ENCODE measurements at regions of chr12 and their contacts with region 1.

Region 1: DNA sequence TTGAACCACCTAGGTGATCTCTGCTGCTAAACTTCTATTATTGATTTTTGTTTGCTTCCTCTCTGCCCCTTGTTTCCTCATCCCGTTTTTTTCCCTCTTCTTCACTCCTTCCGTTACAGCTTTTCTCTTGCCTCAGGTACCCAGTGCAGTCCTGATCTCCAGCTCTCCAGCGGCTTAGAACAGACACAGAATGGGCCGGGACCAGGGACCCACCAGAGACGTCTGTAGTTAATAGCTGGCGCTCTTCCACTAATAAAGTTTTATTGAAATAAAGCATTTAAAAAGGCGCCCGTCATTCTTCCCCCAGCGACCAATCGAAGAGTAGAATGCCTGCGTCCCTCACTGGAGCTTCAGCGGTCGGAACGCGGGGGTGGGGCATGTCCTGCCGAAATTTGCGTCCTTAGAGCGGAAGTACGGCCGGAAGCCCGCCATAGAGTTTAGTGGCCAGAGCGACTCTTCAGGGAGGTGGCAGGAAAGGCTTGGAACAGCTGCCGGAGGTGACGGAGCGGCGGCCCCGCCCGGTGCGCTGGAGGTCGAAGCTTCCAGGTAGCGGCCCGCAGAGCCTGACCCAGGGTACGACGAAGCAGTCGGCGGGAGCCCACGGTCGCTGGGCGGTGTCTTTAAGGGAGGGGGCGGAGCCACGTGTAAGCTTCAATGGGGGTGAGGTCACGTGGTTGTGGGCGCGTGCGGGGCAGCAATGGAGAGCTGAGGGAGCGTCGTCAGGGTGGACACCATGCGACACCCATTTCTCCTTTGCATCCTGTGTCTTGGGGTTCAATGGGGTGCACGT is at the start of gene COPS7A:
- DNase-seq: peak; percentile 93
- ATAC-seq: peak; percentile 97
- H3K4me3 Mint-ChIP-seq: peak within 1 kb of the TSS; percentile 99
- H3K27ac Mint-ChIP-seq: peak within 1 kb of the TSS; percentile 99
- H3K4me1 Mint-ChIP-seq: peaks cover 22% of the 10 kb centered on the region
- H3K27me3 Mint-ChIP-seq: peaks cover 3% of the 10 kb centered on the region
- total RNA-seq, gene COPS7A: 29.8 to 35.6 TPM

Region 2: GRCh38 chr12:6613776-6614512 is 109.9 kb before region 1 on chr12:
- POLR2A ChIA-PET with region 1: interaction called, 11 read pairs
- DNase-seq: peak; percentile 65
- ATAC-seq: peak; percentile 48
- H3K4me3 Mint-ChIP-seq: no peak overlapping the region
- H3K27ac Mint-ChIP-seq: peak overlapping the region; percentile 87
- H3K4me1 Mint-ChIP-seq: peaks cover 50% of the 10 kb centered on the region
- H3K27me3 Mint-ChIP-seq: no peaks in the 10 kb centered on the region

Region 3: DNA sequence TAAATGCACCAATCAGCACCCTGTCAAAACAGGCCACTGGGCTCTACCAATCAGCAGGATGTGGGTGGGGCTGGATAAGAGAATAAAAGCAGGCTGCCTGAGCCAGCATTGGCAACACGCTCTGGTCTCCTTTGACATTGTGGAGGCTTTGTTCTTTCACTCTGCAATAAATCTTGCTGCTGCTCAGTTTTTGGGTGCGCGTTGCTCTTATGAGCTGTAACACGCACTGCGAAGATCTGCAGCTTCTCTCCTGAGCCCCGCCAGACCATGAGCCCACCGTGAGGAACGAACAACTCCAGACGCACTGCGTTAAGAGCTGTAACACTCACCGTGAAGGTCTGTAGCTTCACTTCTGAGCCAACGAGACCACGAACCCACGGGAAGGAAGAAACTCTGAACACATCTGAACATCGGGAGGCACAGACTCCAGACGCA is 14.8 kb before region 1 on chr12:
- POLR2A ChIA-PET with region 1: interaction called, 15 read pairs
- DNase-seq: no peak
- ATAC-seq: peak; percentile 68
- H3K4me3 Mint-ChIP-seq: peak overlapping the region; percentile 61
- H3K27ac Mint-ChIP-seq: peak overlapping the region; percentile 54
- H3K4me1 Mint-ChIP-seq: peaks cover 7% of the 10 kb centered on the region
- H3K27me3 Mint-ChIP-seq: peaks cover 20% of the 10 kb centered on the region

Region 4: DNA sequence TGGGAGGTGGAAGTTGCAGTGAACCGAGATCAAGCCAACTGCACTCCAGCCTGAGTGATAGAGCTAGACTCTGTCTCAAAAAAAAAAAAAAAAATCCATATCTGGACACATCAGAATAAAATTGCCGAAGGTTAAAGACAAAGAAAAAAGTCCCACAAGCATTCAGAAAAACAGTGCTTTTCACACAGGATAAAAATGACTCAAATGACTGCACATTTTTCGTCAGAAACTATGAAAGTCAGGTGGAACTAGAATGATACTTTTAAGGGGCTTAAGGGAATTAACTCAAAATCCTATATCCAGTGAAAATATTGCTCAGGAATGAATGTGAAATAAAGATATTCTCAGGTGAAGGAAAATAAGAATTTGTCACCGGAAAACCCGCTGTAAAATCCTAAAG is 13.0 kb after region 1 on chr12:
- POLR2A ChIA-PET with region 1: no interaction called
- DNase-seq: no peak
- ATAC-seq: no peak
- H3K4me3 Mint-ChIP-seq: no peak overlapping the region
- H3K27ac Mint-ChIP-seq: no peak overlapping the region
- H3K4me1 Mint-ChIP-seq: peaks cover 8% of the 10 kb centered on the region
- H3K27me3 Mint-ChIP-seq: no peaks in the 10 kb centered on the region